Heart right ventricle (tissue), 16 donors: ENCODE measurements at regions of chr3 and their contacts with region 1.

Region 1: DNA sequence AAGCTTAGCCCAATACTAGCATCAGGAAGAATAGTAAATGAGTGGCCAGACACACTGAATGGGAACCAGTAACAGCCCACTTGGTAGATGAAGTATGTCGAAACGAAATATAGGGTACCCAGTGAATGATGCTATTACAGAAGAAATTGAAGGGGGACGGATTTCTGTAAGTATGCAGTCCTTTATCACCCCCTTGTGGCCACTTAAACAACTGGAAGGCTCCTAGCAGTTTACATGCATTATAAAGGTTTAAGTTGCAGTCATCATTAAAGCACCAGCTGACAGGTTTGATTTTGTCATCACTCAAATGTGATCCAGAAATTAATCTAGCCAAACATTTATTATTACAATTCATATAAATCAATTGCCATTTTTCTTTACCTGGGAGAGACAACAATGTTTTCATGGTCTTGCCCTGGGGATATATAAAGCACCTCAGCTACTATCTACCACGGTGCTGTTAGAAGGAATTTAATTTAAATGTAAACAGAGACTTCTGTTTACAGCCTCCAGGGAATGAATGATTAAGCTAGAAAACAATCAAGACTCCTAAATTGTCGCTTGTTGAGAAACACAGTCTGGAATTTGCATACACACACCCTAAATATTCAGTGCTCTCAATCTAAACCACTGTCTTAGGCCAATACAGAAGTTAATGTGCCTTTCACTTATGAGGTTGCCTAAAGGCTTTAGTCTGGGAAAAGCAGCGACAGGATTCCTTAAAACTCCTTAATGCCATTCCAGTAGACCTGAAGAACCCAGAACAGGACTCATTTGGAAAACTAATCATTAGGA is 7.8 kb downstream of the EIF1B start:
- DNase-seq: peak in 1 of 2 donors; percentile 52
- ATAC-seq: peak in 2 of 8 donors; percentile 29 to 34
- H3K4me3 ChIP-seq: no peak overlapping the region
- H3K27ac ChIP-seq: no peak overlapping the region
- H3K4me1 ChIP-seq: peaks cover 0 to 25% (median 20%) of the 10 kb centered on the region in 9 donors
- H3K27me3 ChIP-seq: no peaks in the 10 kb centered on the region
- CTCF ChIP-seq: peak; percentile 63 to 90 (median 82)

Region 2: GRCh38 chr3:39718674-39719595 is 598.3 kb before region 1 on chr3:
- intact Hi-C with region 1: loop called in 2 of 10 experiments (anchors 5 to 10 kb)
- DNase-seq: no peak
- ATAC-seq: no peak
- H3K4me3 ChIP-seq: no peak overlapping the region
- H3K27ac ChIP-seq: no peak overlapping the region
- H3K4me1 ChIP-seq: no peaks in the 10 kb centered on the region
- H3K27me3 ChIP-seq: no peaks in the 10 kb centered on the region
- CTCF ChIP-seq: no peak

Region 3: GRCh38 chr3:39812537-39812936 is 504.7 kb before region 1 on chr3:
- intact Hi-C with region 1: loop called in 1 of 10 experiments (anchors 10 kb)
- DNase-seq: no peak
- ATAC-seq: no peak
- H3K4me3 ChIP-seq: no peak overlapping the region
- H3K27ac ChIP-seq: no peak overlapping the region
- H3K4me1 ChIP-seq: peaks cover 6 to 23% (median 15%) of the 10 kb centered on the region in 9 donors
- H3K27me3 ChIP-seq: peaks cover 0 to 61% (median 37%) of the 10 kb centered on the region in 7 donors
- CTCF ChIP-seq: peak in 7 of 9 donors; percentile 35 to 55 (median 40)

Region 4: DNA sequence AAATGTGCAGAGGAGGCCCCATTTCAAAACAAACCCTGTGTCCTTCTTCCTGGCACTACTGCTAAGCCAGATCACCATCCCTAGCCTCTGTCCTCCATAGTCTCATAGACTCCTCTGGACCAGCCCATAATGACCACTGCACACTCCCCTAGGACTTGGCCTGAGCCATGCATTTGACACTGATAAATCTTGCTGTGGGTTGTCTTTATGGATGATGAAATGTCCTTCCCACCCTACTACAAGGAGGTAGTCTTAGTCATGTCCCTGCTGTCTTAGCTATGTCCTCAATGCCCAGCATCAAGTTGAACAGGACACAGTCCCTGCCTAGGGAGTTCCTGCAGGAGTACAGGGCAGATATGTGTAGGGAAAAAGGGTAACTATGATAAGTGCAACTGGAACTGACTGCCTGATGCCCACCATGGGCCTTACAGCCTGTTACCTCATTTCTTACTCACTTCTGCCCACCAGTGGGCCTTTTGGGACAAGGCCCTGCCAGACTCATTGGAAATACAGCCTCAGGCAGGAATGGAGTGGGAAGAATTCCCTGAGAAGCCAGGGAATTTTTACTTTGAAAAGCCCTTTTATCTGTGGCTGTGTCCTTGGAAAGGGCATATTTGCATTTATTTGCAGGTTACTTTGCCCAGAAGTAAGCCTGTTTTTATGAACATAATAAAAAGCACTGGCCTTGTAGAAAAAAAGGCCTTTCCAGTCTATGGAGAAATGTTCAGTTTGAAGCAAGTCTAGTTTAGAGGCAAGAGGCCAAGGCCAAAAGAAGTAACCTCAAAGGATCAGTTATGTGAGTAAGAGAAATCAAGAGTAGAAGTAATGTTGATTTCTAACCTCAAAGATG is 207.4 kb before region 1 on chr3:
- intact Hi-C with region 1: no loop called
- DNase-seq: no peak
- ATAC-seq: peak in 2 of 8 donors; percentile 33 to 34
- H3K4me3 ChIP-seq: no peak overlapping the region
- H3K27ac ChIP-seq: no peak overlapping the region
- H3K4me1 ChIP-seq: no peaks in the 10 kb centered on the region
- H3K27me3 ChIP-seq: no peaks in the 10 kb centered on the region
- CTCF ChIP-seq: peak in 5 of 9 donors; percentile 5 to 28 (median 18)

Region 5: GRCh38 chr3:40445062-40445461 is 127.8 kb after region 1 on chr3:
- intact Hi-C with region 1: loop called in 5 of 10 experiments (anchors 10 kb)
- DNase-seq: no peak
- ATAC-seq: no peak
- H3K4me3 ChIP-seq: no peak overlapping the region
- H3K27ac ChIP-seq: no peak overlapping the region
- H3K4me1 ChIP-seq: no peaks in the 10 kb centered on the region
- H3K27me3 ChIP-seq: no peaks in the 10 kb centered on the region
- CTCF ChIP-seq: no peak

Region 6: DNA sequence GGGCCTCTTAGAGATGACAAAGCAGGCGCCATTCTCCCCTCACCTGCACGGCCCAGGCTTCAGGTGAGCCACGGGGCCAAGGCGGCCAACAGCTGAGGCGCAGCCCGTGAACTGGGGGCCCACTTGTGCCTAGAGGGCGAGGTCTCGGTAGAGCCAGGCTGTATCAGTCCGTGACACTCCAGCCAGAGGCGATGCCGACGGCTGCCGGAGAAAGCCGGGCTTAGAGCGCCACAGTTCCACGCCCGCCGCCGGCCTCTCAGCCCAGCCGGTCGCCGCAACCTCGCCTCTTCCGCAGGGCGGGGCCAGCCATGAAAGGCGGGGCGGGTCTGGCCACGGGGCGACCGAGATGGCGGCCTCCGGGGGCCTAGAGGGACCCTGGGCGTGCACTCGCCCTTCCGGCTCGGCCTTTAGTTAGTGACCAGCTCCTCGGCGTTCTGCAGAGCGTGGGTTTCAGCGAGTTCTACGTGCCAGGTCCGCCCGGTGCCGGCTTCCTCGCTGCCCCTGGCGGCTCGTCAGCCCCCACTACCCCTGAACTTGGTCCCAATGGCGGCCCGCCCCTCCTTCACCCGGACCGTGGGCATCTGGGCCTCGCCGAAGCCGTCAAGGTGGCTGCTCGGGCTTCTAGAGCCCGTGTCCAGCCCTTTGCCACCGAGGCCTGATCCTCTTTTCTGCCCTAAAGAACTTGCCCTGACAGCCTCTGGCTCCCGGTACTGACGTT is 207.5 kb after region 1 on chr3 and contains the start of gene ZNF621:
- intact Hi-C with region 1: loop called in 1 of 10 experiments (anchors 5 kb)
- DNase-seq: peak; percentile 92 to 94
- ATAC-seq: peak; percentile 100
- H3K4me3 ChIP-seq: peak within 1 kb of the TSS; percentile 62 to 97 (median 78)
- H3K27ac ChIP-seq: peak within 1 kb of the TSS; percentile 57 to 96 (median 90)
- H3K4me1 ChIP-seq: peaks cover 0 to 22% (median 12%) of the 10 kb centered on the region in 9 donors
- H3K27me3 ChIP-seq: no peaks in the 10 kb centered on the region
- CTCF ChIP-seq: peak in 2 of 9 donors; percentile 14 to 20
- total RNA-seq, gene ZNF621: 8.9 to 14.6 (median 10.5) TPM

Region 7: GRCh38 chr3:41881233-41881821 is 1564.1 kb after region 1 on chr3:
- intact Hi-C with region 1: loop called in 1 of 10 experiments (anchors 10 kb)
- DNase-seq: peak in 1 of 2 donors; percentile 23
- ATAC-seq: no peak
- H3K4me3 ChIP-seq: no peak overlapping the region
- H3K27ac ChIP-seq: no peak overlapping the region
- H3K4me1 ChIP-seq: no peaks in the 10 kb centered on the region
- H3K27me3 ChIP-seq: no peaks in the 10 kb centered on the region
- CTCF ChIP-seq: peak; percentile 47 to 81 (median 76)